Colonic mucosa (tissue), 4 donors: ENCODE measurements at regions of chr1 and their contacts with region 1.

Region 1: GRCh38 chr1:5745776-5746610 is 246.2 kb downstream of the NPHP4 start:
- DNase-seq: peak; percentile 47
- H3K4me3 ChIP-seq: no peak overlapping the region
- H3K27ac ChIP-seq: no peak overlapping the region
- H3K4me1 ChIP-seq: no peaks in the 10 kb centered on the region
- H3K27me3 ChIP-seq: no peaks in the 10 kb centered on the region
- CTCF ChIP-seq: peak; percentile 94

Region 2: DNA sequence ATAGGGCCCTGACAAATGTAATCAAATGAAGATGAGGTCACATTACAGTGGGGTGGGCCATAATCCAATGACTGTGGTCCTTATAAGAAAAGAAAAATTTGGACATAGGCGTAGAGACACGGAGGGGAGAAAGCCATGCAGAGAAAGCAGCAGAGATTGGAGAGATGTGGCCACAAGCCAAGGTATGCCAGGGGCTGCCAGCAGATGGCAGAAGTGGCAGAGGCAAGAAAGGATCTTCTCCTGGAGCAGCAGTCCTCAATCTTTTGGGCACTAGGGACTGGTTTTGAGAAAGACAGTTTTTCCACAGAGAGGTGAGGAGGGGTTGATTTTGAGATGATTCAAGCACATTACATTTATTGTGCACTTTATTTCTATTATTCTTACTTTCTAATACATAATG is 108.8 kb before region 1 on chr1:
- intact Hi-C with region 1: loop called (anchors 2 kb)
- DNase-seq: peak; percentile 46
- H3K4me3 ChIP-seq: no peak overlapping the region
- H3K27ac ChIP-seq: no peak overlapping the region
- H3K4me1 ChIP-seq: no peaks in the 10 kb centered on the region
- H3K27me3 ChIP-seq: no peaks in the 10 kb centered on the region
- CTCF ChIP-seq: peak; percentile 45